ENCODE measurements at regions of chr17 and their contacts with region 1.

Region 1: DNA sequence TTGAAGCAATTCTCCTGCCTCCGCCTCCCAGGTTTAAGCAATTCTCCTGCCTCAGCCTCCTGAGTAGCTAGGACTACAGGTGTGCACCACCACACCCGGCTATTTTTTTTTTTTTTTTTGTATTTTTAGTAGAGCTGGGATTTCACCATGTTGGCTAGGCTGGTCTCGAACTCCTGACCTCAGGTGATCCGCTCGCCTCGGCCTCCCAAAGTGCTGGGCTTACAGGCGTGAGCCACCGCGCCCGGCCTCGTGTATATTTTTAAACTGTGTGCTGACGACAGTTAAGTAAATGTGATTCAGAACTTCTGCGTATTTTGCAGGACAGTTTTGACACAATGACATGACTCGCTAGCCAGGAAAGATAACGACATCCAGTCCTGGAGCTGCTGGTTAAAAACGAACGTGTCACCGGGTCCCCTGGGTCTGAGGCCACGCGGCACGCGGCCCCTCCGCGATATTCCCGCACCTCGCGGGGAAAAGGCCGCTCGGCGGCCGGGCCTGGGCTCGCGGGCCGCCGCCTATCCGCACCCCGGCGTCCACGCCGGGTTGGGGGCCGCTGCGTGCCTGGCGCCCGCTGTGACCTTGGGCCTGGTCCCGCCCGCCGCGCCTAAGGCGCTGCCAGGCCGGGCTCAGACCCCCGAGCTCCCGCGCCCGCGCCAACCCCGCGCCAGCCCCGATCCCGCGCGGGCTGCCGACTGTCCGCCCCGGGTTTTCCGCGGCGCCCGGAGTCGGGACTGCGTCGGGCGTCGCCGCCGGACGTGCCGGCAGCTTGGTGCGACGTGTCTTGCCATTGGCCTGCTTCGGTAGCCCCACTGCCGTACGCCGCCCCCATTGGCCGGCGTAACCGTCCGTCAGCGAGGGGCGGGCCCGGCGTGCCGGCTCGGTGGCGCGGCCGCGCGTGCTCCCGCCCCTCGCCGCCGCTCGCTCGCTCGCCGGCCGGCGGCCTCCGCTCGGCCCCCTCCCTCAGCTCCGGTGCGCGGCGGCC is at the start of gene FOXK2:
- DNase-seq: peak; percentile 91 to 96 (median 93)
- H3K4me3 ChIP-seq: peak within 1 kb of the TSS; percentile 73
- H3K27ac ChIP-seq: peak within 1 kb of the TSS; percentile 95
- H3K4me1 ChIP-seq: peaks cover 9% of the 10 kb centered on the region
- H3K27me3 ChIP-seq: no peaks in the 10 kb centered on the region
- CTCF ChIP-seq: peak in 1 of 3 donors; percentile 32
- EP300 ChIP-seq: peak; percentile 47
- POLR2A ChIP-seq: peak; percentile 82
- total RNA-seq, gene FOXK2: 27.2 to 67.6 (median 48.2) TPM

Region 2: GRCh38 chr17:82145550-82146190 is 373.4 kb before region 1 on chr17:
- intact Hi-C with region 1: no loop called
- DNase-seq: no peak
- H3K4me3 ChIP-seq: no peak overlapping the region
- H3K27ac ChIP-seq: no peak overlapping the region
- H3K4me1 ChIP-seq: peaks cover 1% of the 10 kb centered on the region
- H3K27me3 ChIP-seq: no peaks in the 10 kb centered on the region
- CTCF ChIP-seq: no peak
- EP300 ChIP-seq: no peak
- POLR2A ChIP-seq: no peak

Region 3: GRCh38 chr17:82380860-82381702 is 138.0 kb before region 1 on chr17:
- intact Hi-C with region 1: no loop called
- DNase-seq: no peak
- H3K4me3 ChIP-seq: no peak overlapping the region
- H3K27ac ChIP-seq: no peak overlapping the region
- H3K4me1 ChIP-seq: peaks cover 1% of the 10 kb centered on the region
- H3K27me3 ChIP-seq: no peaks in the 10 kb centered on the region
- CTCF ChIP-seq: no peak
- EP300 ChIP-seq: no peak
- POLR2A ChIP-seq: no peak

Region 4: GRCh38 chr17:82551779-82552457 is 32.8 kb after region 1 on chr17:
- intact Hi-C with region 1: loop called in 1 of 4 experiments (anchors 5 kb)
- DNase-seq: peak; percentile 72 to 85 (median 78)
- H3K4me3 ChIP-seq: no peak overlapping the region
- H3K27ac ChIP-seq: no peak overlapping the region
- H3K4me1 ChIP-seq: peaks cover 14% of the 10 kb centered on the region
- H3K27me3 ChIP-seq: no peaks in the 10 kb centered on the region
- CTCF ChIP-seq: peak; percentile 65 to 82 (median 81)
- EP300 ChIP-seq: no peak
- POLR2A ChIP-seq: no peak

Region 5: DNA sequence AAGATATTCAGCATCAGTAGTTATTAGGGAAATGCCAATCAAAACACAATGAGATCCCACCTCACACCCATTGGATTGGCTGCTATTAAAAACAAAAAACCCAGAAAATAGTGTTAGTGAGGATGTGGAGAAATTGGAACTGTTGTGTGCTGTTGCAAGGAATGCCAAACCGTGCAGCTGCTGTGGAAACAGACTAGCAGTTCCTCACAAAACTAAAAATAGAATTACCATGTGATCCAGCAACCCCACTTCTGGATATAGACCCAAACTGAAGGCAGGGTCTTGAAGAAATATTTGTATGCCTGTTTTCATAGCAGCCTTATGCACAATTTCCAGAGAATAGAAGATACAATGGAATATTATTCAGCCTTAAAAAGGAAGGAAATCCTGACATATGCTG is 46.4 kb after region 1 on chr17:
- intact Hi-C with region 1: no loop called
- DNase-seq: no peak
- H3K4me3 ChIP-seq: no peak overlapping the region
- H3K27ac ChIP-seq: no peak overlapping the region
- H3K4me1 ChIP-seq: peaks cover 12% of the 10 kb centered on the region
- H3K27me3 ChIP-seq: no peaks in the 10 kb centered on the region
- CTCF ChIP-seq: no peak
- EP300 ChIP-seq: no peak
- POLR2A ChIP-seq: no peak